ENCODE measurements at regions of chr2 and their contacts with region 1.

Region 1: GRCh38 chr2:54665436-54665856 is 58.0 kb upstream of the EML6 start:
- DNase-seq: peak; percentile 74
- H3K4me3 ChIP-seq: no peak overlapping the region
- H3K27ac ChIP-seq: no peak overlapping the region
- H3K4me1 ChIP-seq: no peaks in the 10 kb centered on the region
- CTCF ChIP-seq: peak; percentile 91

Region 2: DNA sequence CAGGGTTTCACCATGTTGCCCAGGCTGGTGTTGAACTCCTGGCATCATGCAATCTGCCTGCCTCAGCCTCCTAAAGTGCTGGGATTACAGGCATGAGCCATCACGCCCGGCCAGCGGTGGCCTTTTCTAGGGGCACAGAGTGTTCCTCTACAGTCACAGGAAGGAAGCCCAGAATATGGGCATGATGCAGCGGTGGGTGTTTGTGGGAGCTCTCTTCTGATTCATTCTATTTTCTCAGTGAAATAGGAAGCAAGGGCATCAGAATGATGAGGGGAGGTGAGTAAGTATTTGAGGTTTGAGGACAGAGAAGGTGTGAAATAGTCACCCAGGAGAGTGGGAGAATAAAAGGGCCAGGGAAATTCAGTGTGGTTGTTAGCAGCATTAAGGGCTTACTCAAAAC is 624.3 kb before region 1 on chr2:
- CTCF ChIA-PET with region 1: no interaction called
- POLR2A ChIA-PET with region 1: no interaction called
- intact Hi-C with region 1: no loop called
- DNase-seq: no peak
- H3K4me3 ChIP-seq: no peak overlapping the region
- H3K27ac ChIP-seq: no peak overlapping the region
- H3K4me1 ChIP-seq: no peaks in the 10 kb centered on the region
- CTCF ChIP-seq: no peak

Region 3: DNA sequence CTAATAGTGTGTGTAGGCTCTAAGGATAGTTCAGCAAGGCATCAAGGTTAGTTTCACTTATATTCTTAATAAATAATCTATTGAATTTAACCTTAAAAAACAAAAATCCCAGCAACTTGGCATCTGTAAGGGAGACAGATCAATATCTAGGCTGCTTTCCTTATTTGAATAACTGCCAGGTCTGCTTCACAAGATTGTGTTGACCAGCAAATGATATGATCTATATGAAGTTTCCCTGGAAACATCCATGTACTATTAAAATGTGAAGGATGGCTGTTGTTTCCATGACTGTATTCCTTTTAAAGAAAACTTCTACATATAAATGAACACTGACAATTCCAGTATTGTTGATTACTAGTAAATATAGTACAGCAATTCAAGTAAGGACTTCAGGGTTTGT is 99.9 kb before region 1 on chr2:
- CTCF ChIA-PET with region 1: no interaction called
- POLR2A ChIA-PET with region 1: no interaction called
- intact Hi-C with region 1: no loop called
- DNase-seq: no peak
- H3K4me3 ChIP-seq: no peak overlapping the region
- H3K27ac ChIP-seq: no peak overlapping the region
- H3K4me1 ChIP-seq: peaks cover 85% of the 10 kb centered on the region
- CTCF ChIP-seq: no peak

Region 4: GRCh38 chr2:54604871-54605270 is 60.6 kb before region 1 on chr2:
- CTCF ChIA-PET with region 1: interaction called, 5 read pairs
- POLR2A ChIA-PET with region 1: interaction called, 10 read pairs
- intact Hi-C with region 1: no loop called
- DNase-seq: no peak
- H3K4me3 ChIP-seq: no peak overlapping the region
- H3K27ac ChIP-seq: no peak overlapping the region
- H3K4me1 ChIP-seq: peaks cover 32% of the 10 kb centered on the region
- CTCF ChIP-seq: no peak

Region 5: DNA sequence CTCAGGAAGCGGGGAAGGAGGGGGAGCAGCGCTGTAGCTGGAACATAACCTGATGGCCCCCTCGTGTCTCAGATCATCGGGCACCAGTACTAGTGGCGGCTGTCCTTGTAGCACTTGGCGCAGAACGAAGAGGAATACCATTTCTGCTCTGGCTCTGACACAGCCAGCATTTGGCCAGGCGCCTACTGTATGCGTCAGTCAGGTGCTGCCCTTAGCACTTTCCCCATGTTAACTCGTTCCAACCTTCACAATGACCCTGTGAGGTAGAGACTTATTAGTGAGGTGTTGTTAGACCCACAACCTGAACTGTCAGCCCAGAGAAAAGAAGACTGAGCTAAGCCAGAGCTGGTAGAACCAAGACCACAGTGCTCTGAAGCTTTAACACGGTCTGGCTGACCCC is 10.3 kb after region 1 on chr2:
- CTCF ChIA-PET with region 1: interaction called, 11 read pairs
- POLR2A ChIA-PET with region 1: interaction called, 3 read pairs
- intact Hi-C with region 1: no loop called
- DNase-seq: no peak
- H3K4me3 ChIP-seq: no peak overlapping the region
- H3K27ac ChIP-seq: no peak overlapping the region
- H3K4me1 ChIP-seq: peaks cover 43% of the 10 kb centered on the region
- CTCF ChIP-seq: no peak

Region 6: DNA sequence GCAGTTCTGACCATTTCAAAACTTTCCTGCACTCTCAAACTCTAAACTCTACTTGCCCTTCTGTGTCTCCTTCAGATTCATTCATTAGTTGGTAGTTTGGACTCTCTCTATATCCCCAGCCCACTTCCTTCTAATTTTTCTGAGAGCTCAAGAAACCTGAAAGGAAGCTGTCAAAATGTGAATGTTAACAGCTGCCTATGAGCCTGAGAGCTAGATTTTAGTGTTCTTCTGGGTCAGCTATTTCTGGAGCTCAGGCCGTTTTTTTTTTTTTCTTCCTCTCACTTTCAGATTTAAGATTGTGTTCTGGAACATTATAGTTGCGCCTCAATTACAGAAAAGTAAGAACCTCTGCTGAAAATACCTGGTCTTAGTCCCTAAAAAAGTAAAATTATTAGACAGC is 311.7 kb after region 1 on chr2:
- CTCF ChIA-PET with region 1: no interaction called
- POLR2A ChIA-PET with region 1: no interaction called
- intact Hi-C with region 1: loop called (anchors 10 kb)
- DNase-seq: peak; percentile 29
- H3K4me3 ChIP-seq: no peak overlapping the region
- H3K27ac ChIP-seq: peak overlapping the region; percentile 12
- H3K4me1 ChIP-seq: peaks cover 8% of the 10 kb centered on the region
- CTCF ChIP-seq: no peak